OCI-LY7 (cell line): ENCODE measurements at regions of chr7 and their contacts with region 1.

Region 1: DNA sequence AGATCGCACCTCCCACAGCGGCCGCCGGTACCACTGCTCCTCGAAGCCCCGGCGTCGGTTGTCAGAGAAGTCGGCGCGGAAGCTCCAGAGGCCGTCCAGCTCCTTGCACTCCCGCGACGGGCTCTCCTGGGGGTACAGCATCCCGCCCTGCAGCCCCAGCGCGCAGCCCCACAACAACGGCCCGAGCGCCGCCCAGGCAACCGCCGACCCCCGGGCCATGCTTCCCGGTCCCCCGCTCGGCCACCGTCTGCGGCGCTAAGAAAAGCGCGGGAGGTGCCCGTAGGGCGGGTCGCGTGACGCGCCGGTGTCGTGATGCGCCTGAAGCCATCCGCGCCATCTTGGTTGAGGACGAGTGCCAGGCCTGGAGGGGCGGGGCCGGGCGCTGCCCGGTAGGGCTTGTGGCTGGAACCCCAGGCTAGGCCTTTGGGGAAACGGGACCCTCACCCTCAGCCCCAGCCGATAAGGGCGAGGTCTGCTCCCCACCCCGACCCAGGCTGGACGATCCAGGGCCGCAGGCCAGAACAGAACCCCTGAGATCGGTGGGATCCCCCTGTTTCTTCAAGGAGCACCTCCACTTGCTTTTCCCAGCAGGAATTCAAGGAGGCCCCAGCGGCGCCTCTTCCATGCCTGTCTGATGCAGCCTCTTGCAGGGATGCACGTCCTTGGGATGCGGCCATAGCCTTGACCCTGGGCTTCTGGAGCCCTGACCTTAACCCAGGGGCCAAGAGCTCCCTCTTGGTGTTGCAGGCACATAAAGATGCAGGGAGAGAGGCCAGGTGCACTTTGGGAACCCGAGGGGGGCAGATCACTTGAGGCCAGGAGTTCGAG is at the start of gene GUSB:
- DNase-seq: peak; percentile 95
- H3K4me3 ChIP-seq: peak within 1 kb of the TSS; percentile 90
- H3K27ac ChIP-seq: peak within 1 kb of the TSS; percentile 54
- H3K4me1 ChIP-seq: peaks cover 14% of the 10 kb centered on the region
- CTCF ChIP-seq: no peak
- total RNA-seq, gene GUSB: 44.7 and 49.5 TPM in 2 replicates

Region 2: DNA sequence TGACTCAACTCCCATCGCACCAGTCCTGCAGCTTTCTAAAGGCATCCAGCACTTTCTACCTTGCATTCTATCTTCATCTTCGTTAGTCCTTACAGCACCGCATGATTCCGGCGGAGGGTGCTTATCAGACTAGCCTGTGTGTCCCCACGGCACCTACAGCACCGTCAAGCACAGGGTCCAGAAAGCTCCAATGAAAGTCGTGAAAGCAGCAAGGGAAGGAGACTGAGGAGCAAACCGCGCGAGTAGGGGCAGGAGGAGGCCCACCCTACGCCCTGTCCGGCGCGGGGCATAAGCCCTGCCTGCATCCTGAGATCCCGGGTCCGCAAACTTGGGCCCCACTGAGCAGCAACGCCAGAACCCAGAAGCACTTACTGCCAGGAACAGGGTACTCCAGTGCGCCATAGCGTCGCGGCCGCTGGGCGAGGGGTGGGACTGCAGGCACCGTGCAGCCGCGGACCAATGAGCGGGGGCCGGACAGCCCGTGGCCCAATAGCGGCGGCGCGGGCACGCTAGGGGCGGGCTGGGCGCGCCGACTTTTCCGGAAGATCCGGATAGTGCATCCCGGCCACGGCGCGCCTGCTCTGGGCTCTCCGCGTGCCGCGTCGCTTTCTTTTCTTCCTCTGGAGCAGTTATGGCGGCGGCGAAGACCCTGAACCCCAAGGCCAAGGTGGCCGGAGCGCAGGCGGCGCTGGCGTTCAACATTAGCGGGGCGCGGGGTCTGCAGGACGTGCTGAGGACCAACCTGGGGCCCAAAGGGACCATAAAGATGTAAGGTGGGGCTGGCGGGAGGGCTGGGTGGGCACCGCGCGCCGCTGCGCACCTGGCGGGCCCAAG is 231.5 kb before region 1 on chr7:
- CTCF ChIA-PET with region 1: no interaction called
- POLR2A ChIA-PET with region 1: no interaction called
- intact Hi-C with region 1: loop called (anchors 2 kb)
- DNase-seq: peak; percentile 92
- H3K4me3 ChIP-seq: peak overlapping the region; percentile 90
- H3K27ac ChIP-seq: peak overlapping the region; percentile 59
- H3K4me1 ChIP-seq: peaks cover 18% of the 10 kb centered on the region
- CTCF ChIP-seq: no peak

Region 3: GRCh38 chr7:65872776-65873581 is 109.2 kb before region 1 on chr7 and contains the start of gene VKORC1L1:
- CTCF ChIA-PET with region 1: no interaction called
- POLR2A ChIA-PET with region 1: no interaction called
- intact Hi-C with region 1: loop called (anchors 2 kb)
- DNase-seq: peak; percentile 95
- H3K4me3 ChIP-seq: peak within 1 kb of the TSS; percentile 98
- H3K27ac ChIP-seq: peak within 1 kb of the TSS; percentile 66
- H3K4me1 ChIP-seq: peaks cover 10% of the 10 kb centered on the region
- CTCF ChIP-seq: no peak
- total RNA-seq, gene VKORC1L1: 12.1 and 17.4 TPM in 2 replicates

Region 4: DNA sequence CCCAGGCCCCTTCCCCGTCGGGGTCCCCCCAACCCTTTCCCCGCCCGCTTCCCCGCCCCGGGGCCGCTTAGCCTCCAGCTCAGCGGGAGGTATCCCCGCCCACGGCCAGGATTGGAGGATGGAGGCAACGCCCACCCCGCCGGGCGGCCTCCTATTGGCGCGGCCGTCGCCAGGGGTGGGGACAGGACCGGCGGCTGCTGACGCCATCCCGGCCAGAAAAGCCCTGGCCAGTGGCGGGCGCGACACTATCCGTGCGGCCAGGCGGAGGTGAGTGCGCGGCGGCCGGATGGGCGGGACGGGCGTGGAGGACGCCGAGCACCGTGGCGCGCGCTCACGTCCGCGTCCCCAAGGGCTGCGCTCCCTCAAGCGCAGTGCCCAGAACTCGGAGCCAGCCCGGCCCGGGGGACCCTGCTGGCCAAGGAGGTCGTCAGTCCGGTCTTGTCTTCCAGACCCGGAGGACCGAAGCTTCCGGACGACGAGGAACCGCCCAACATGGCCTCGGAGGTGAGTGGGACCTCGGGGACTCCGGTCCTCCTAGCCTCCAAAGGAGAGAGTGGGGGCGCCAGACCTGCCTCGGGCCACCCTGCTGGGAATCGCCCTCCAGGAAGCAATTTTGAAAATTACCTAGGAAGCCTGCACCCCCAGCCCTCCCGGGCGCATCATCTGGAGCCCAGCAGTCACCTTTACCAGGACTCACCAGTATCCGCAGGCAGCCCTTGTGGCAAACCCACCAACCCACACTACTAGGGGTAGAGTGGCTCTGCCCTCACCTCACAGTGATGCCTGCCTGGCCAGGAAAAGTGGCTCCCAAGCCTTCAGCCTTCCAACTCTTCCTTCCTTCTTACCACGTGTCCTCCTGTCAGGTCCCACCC is 93.6 kb after region 1 on chr7 and contains the start of gene ASL:
- CTCF ChIA-PET with region 1: no interaction called
- POLR2A ChIA-PET with region 1: no interaction called
- intact Hi-C with region 1: loop called (anchors 5 kb)
- DNase-seq: peak; percentile 92
- H3K4me3 ChIP-seq: peak within 1 kb of the TSS; percentile 73
- H3K27ac ChIP-seq: no peak within 1 kb of the TSS
- H3K4me1 ChIP-seq: peaks cover 7% of the 10 kb centered on the region
- CTCF ChIP-seq: peak; percentile 51; the same call in 1 of the 2 replicates
- total RNA-seq, gene ASL: 21.5 and 22.2 TPM in 2 replicates

Region 5: GRCh38 chr7:66114793-66115649 is 132.8 kb after region 1 on chr7 and contains the start of gene CRCP:
- CTCF ChIA-PET with region 1: no interaction called
- POLR2A ChIA-PET with region 1: no interaction called
- intact Hi-C with region 1: loop called (anchors 1 kb)
- DNase-seq: peak; percentile 88
- H3K4me3 ChIP-seq: peak within 1 kb of the TSS; percentile 97
- H3K27ac ChIP-seq: peak within 1 kb of the TSS; percentile 87
- H3K4me1 ChIP-seq: peaks cover 38% of the 10 kb centered on the region
- CTCF ChIP-seq: peak; percentile 44
- total RNA-seq, gene CRCP: 25.1 and 47.1 TPM in 2 replicates

Region 6: DNA sequence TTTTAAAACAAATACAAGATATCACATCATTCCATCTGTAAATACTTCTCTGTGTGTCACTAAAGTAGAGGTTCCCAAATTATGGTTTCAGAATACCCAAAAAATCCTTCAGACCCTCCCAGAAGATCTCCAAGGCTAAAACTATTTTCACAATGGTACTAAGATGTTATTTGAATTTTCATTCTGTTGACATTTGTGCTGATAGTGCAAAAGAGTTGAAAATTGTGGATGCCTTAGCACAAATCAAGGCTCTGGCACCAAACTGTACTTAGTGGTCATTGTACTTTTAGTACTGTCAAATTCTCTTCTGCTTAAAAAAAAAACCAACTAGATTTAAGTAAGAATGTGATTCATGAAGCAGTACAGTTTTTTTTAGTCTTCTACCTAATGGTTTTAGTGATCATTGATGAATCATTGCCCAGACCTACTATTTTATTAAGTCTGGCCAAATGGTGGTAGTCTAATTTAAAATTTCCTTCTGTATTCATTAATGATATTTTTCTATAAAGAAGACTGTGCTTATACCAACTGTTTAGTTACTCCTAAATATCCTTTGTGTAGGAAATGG is 273.4 kb after region 1 on chr7:
- CTCF ChIA-PET with region 1: no interaction called
- POLR2A ChIA-PET with region 1: no interaction called
- intact Hi-C with region 1: no loop called
- DNase-seq: no peak
- H3K4me3 ChIP-seq: no peak overlapping the region
- H3K27ac ChIP-seq: no peak overlapping the region
- H3K4me1 ChIP-seq: no peaks in the 10 kb centered on the region
- CTCF ChIP-seq: no peak